GM12878 (cell line): ENCODE measurements at regions of chr17 and their contacts with region 1.

Region 1: GRCh38 chr17:28057731-28058279 is 15.3 kb downstream of the NLK start:
- DNase-seq: peak; percentile 84
- ATAC-seq: peak; percentile 89
- H3K4me3 ChIP-seq: peak overlapping the region; percentile 22; the same call in 1 of the 2 replicates
- H3K27ac ChIP-seq: peak overlapping the region; percentile 66
- H3K4me1 ChIP-seq: peaks cover 52% of the 10 kb centered on the region
- H3K27me3 ChIP-seq: no peaks in the 10 kb centered on the region
- CTCF ChIP-seq: no peak
- EP300 ChIP-seq: peak; percentile 98 to 99
- POLR2A ChIP-seq: no peak
- RAD21 ChIP-seq: no peak

Region 2: GRCh38 chr17:27466743-27467375 is 590.9 kb before region 1 on chr17:
- CTCF ChIA-PET with region 1: no interaction called
- POLR2A ChIA-PET with region 1: no interaction called
- RAD21 ChIA-PET with region 1: no interaction called
- SMC1A ChIA-PET with region 1: no interaction called
- in situ Hi-C with region 1: loop called (anchors 10 kb)
- intact Hi-C with region 1: no loop called
- DNase-seq: peak; percentile 87
- ATAC-seq: peak; percentile 79
- H3K4me3 ChIP-seq: peak overlapping the region; percentile 54
- H3K27ac ChIP-seq: peak overlapping the region; percentile 92
- H3K4me1 ChIP-seq: peaks cover 67% of the 10 kb centered on the region
- H3K27me3 ChIP-seq: no peaks in the 10 kb centered on the region
- CTCF ChIP-seq: 0 out of 6 replicates have a peak, but pooled peaks of 1 of the 3 experiments have one; percentile 4
- EP300 ChIP-seq: peak; percentile 26 to 90; a peak in 3 of 4 replicates
- POLR2A ChIP-seq: peak; percentile 47; the same call in 1 of the 2 replicates
- RAD21 ChIP-seq: no peak; the same call in 1 of the 2 replicates

Region 3: DNA sequence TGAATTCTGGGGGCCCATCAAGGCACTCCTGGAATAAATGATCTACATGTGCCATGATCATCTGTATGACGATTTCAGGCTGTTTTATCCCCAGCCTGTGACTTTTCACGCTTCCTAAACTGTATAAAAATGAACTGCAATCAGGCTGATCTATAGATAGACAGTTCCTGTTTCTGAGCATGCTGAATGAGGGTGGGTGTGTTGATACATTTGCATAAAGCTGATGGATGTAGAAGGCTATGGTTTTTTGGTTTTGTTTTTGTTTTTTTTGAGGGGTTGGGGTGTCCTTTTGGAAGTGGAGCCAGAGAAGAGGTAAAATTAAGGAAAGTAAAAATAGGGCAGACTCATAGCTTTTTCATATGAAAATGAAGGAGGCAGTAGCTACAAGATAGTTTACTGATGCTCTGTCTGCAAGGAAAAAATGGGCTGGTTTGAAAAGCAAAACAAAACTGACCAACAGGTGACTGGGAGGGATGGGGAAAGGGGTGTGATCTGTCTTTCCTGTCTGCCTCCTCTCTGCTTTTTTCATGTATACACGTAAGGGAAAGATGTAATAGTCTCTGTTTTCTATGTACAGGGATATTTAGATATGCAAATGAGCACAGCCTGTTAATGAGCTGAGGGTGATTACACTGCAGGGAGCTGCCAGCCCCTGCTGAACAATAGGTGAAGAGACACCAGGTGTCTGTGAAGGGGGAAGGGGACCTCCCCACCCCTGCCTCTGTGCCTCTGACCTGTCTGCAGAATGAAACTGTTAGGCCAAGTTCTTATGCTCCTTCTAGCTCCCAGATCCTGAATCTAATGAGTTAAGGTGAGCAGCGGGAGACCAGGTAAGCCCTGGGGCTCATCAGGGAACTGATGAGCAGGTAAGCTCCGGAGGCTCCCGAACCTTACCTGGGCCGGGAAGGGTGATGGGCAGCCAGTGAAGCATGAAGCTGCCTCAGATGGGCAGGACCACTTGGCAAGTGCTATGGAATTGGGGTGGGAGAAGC is 118.0 kb before region 1 on chr17:
- CTCF ChIA-PET with region 1: no interaction called
- POLR2A ChIA-PET with region 1: no interaction called
- RAD21 ChIA-PET with region 1: interaction called, 5 read pairs
- SMC1A ChIA-PET with region 1: interaction called, 11 read pairs
- in situ Hi-C with region 1: no loop called
- intact Hi-C with region 1: no loop called
- DNase-seq: no peak
- ATAC-seq: peak; percentile 93
- H3K4me3 ChIP-seq: no peak overlapping the region
- H3K27ac ChIP-seq: no peak overlapping the region
- H3K4me1 ChIP-seq: peaks cover 13% of the 10 kb centered on the region
- H3K27me3 ChIP-seq: no peaks in the 10 kb centered on the region
- CTCF ChIP-seq: no peak
- EP300 ChIP-seq: no peak; a peak in 1 of 4 replicates
- POLR2A ChIP-seq: no peak
- RAD21 ChIP-seq: no peak

Region 4: DNA sequence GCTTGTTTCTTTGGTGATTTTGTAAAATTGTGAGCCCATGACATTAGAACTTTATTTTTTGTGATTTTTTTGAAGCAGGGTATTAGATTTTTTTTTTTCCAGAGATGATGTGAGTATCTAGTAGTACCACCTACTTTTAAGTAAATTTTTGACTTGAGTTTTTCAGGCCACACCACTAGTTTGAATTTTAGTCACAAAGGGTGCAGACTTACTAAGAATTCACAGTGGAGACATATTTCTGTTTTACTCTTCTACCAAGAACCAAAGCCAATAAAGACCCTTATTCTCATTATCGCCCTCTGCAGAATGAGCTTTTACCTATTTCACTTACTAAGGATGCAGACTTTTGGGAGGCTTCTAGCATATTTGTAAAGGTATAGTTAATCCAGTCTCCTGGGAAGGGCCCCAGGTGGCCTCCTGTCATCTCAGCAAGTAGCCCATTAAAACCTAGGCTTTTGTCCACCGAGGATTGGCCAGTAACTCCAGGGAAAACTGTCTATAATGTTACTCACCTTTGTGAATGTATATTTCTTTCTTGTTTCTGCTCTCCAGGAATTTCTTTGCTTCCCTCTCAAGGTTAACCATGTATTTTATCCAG is 15.2 kb after region 1 on chr17:
- CTCF ChIA-PET with region 1: interaction called, 5 read pairs
- POLR2A ChIA-PET with region 1: interaction called, 5 read pairs
- RAD21 ChIA-PET with region 1: interaction called, 3 read pairs
- SMC1A ChIA-PET with region 1: interaction called, 11 read pairs
- in situ Hi-C with region 1: no loop called
- intact Hi-C with region 1: no loop called
- DNase-seq: no peak
- ATAC-seq: no peak
- H3K4me3 ChIP-seq: no peak overlapping the region
- H3K27ac ChIP-seq: no peak overlapping the region
- H3K4me1 ChIP-seq: peaks cover 3% of the 10 kb centered on the region; the same call in 1 of the 2 replicates
- H3K27me3 ChIP-seq: no peaks in the 10 kb centered on the region
- CTCF ChIP-seq: no peak
- EP300 ChIP-seq: no peak
- POLR2A ChIP-seq: no peak
- RAD21 ChIP-seq: no peak

Region 5: DNA sequence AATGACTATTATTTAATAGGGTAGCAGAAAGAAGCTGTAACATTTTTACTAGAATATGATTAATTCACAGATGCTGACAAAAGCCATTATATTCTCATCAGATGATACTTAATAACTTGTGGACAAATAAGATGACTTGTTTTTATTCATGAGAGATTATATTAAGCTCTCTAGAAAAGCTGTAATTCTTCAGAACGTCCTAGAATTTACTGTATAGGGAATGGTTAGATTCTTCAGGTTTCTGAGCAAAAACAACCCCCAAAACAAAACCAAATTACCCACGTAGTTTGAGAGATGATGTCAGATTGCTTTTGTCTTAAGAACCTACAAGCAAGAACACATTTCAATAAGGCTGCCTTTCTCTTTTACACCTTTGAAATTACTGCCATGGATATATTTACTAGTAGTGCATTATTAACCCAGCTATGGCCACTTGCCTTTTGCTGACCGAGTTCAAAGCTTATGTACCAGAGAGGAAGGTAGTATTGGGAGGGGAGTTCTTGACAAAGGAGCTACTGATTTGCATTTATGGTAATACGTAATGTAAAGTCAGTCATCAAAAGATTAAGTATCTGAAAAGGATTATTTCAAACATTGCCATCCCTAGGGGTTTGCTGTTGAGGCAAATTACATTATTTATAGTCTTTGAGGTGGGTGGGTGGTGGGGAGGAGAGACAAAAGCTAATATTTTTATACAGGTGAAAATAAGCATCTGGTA is 36.4 kb after region 1 on chr17:
- CTCF ChIA-PET with region 1: no interaction called
- POLR2A ChIA-PET with region 1: no interaction called
- RAD21 ChIA-PET with region 1: interaction called, 5 read pairs
- SMC1A ChIA-PET with region 1: interaction called, 10 read pairs
- in situ Hi-C with region 1: no loop called
- intact Hi-C with region 1: no loop called
- DNase-seq: no peak
- ATAC-seq: peak; percentile 21; the same call in 1 of the 3 replicates
- H3K4me3 ChIP-seq: no peak overlapping the region
- H3K27ac ChIP-seq: no peak overlapping the region
- H3K4me1 ChIP-seq: peaks cover 10% of the 10 kb centered on the region; the same call in 1 of the 2 replicates
- H3K27me3 ChIP-seq: no peaks in the 10 kb centered on the region
- CTCF ChIP-seq: no peak
- EP300 ChIP-seq: no peak
- POLR2A ChIP-seq: no peak
- RAD21 ChIP-seq: no peak